GM10248 (cell line): ENCODE measurements at regions of chr4 and their contacts with region 1.

Region 1: DNA sequence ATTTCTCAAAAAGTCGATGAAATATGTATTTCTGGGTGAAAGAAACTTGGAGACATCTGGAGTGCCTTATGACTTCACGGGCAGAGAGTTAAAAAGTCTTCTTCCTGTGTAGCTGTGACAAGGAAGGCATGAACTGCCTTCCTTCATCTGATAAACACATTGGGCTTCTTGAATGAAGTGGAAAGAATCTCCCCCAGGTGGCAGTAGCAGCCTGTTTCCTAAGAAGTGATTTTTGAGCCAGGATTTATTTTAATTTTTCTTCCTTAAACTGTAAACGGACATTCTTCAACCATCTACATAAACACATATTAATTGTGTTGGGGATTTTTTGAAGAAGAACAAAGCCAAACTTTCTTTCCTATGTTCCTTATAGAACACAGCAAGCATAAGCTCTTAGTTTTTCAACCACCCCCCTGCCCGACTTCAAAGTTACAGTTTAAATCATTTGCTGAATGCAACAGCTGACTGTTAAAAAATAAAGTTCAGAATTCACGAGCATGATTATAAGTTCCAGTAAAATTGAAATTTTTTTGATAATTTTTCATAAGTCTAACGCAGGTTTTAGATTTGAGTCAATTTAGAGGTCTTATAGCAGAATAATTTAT is 980 bp upstream of the GIMD1 start:
- DNase-seq: peak; percentile 17
- CTCF ChIP-seq: peak; percentile 50

Region 2: GRCh38 chr4:104860238-104861123 is 1509.1 kb before region 1 on chr4:
- CTCF ChIA-PET with region 1: no interaction called
- POLR2A ChIA-PET with region 1: no interaction called
- DNase-seq: peak; percentile 54
- CTCF ChIP-seq: peak; percentile 75

Region 3: DNA sequence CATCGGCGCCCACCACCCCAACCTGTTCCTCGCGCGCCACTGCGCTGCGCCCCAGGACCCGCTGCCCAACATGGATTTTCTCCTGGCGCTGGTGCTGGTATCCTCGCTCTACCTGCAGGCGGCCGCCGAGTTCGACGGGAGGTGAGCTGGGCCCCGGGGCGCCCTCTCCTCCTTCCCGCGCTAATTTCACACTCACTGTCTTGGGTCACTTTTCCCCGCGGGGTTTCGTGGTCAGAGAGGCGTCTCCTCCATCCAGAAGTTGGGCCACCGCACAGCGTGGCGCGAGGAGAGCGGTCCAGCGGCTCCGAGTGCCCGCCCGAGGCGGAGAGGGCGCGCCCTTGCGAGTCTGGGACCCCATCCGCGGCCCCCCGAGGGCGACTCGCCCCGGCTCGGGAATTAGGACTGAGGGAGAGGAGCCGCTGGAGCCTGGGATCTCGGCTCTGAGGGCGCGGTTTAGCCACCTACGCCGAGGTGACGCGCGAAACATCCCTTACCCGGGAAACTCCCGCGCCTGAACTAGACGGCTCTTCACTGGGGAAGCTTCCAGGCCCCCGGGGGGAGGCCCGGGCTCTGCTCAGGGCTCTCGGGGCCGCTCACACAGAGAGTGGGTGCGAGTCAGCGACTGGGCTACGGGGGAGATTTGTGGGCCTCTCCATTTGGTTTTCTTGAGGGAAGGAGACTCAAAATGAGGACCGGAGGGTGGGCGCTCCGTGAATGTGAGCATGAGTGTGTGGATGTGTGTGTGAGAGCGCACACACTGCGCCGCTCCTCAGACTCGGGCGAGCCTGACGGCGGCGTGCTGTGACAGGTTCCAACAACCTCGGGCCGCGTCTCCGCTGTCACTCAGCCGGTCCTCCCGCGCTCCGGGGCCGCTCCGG is 473.7 kb before region 1 on chr4:
- CTCF ChIA-PET with region 1: no interaction called
- POLR2A ChIA-PET with region 1: no interaction called
- DNase-seq: peak; percentile 67
- CTCF ChIP-seq: no peak

Region 4: GRCh38 chr4:106358899-106359298 is 10.7 kb before region 1 on chr4:
- CTCF ChIA-PET with region 1: interaction called, 11 read pairs
- POLR2A ChIA-PET with region 1: no interaction called
- DNase-seq: no peak
- CTCF ChIP-seq: no peak

Region 5: GRCh38 chr4:106384878-106385277 is 15.3 kb after region 1 on chr4:
- CTCF ChIA-PET with region 1: interaction called, 14 read pairs
- POLR2A ChIA-PET with region 1: no interaction called
- DNase-seq: no peak
- CTCF ChIP-seq: no peak